Cardiac septum (tissue), 1 donor: ENCODE measurements at regions of chr11 and their contacts with region 1.

Region 1: DNA sequence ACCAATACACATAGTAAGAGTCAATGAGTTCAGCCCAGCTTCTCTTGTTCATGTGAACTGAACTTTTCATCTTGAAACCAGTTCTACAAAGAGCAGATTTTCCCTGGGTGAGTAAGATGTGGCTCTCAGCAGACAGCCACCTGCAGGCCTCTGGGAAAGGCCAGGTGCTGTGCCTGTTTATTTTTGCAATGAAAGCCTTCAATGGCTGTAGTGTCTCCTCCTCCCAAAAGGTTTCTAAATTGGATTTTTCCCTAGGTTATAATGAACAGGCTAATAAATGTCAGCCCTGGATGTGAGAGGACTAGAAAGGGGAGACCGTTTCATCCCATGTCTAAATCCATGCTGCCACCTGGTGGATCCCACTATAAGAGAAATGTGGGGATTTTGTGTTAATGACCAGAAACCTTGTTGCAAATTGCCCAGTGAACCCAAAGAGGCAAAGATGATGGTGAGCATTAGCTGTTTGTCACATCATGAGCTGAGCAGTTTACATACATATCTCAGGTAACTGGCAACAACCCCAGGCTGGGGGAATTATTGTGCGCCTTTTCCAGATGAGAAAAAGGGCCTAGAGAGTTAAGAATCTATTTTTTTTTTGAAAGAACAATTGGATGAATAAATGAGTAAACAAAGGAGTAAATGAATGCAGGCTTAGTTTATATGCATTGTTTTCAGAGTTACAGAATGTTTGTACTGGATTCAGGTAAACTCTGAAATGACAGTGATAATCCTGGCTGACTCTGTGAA is 12.7 kb downstream of the C11orf91 start:
- DNase-seq: no peak

Region 2: GRCh38 chr11:33161120-33162005 is 526.5 kb before region 1 on chr11 and contains the start of gene CSTF3:
- intact Hi-C with region 1: loop called (anchors 2 kb)
- DNase-seq: peak; percentile 100
- total RNA-seq, gene CSTF3: 16.0 TPM

Region 3: GRCh38 chr11:33362051-33362910 is 325.6 kb before region 1 on chr11:
- intact Hi-C with region 1: loop called (anchors 2 kb)
- DNase-seq: no peak

Region 4: GRCh38 chr11:33542921-33543320 is 145.0 kb before region 1 on chr11:
- intact Hi-C with region 1: loop called (anchors 5 kb)
- DNase-seq: no peak

Region 5: DNA sequence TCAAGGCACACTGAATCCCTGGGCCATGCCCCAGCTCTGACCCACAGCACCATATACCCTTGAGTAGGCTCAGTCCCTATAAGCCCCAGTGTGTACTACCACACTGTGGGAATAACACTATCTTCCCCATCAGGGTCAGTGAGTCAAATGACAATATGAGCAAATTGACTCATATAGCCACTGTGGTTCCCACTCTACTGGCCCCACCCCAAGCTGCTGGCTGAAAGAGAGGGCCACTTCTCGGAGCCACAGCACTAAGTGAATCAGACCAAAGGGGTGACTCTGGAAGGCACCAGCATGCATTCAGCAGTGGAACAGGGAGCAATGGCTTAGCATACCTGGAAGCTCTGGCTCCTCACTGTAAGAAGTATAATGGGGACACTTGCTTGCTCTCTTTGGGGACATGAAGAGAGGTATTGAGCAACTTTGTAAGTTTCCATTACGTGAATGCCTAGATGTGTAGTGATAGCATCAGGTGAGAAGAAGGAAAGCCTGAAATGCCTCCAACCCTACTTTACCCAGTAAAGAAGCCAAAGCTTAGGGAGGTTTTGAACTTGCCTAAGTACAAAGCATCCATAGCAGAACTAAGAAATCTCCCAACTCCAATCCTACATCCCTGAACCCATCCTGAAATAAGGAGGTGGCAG is 34.8 kb after region 1 on chr11:
- intact Hi-C with region 1: loop called (anchors 1 kb)
- DNase-seq: no peak

Region 6: DNA sequence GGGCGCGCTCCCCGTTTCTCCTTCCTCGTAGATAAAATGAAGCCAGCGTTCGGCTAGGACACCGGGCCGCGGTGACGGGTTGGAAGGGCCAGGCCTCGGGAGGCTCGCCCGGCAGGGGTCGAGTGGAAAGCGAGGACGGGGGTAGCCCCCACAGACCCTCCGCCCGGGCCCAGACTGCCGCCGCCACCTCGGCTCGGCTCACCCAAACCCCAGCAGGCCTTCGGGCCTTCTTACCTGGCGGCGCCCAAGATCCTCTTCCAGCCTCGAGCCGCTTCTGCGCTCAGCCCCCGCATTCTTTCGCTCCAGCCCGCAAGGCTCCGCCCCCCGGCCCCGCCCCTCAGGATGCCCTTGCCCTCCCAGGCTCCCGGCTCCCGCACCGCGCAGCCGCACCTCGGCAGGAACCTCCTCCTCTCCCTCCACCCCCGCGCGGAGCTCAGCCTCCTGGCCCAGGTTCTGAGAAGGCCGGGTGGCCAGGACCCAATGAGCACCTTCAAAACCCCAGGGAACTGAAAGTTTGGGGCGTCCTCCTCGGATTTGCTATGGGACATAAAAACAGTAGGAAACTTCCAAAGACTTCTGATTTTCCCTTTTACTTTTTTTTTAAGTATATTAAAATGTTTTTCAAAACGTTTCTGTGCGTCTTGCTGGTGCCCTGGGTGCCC is 48.4 kb after region 1 on chr11 and contains the start of gene CD59:
- intact Hi-C with region 1: loop called (anchors 2 kb)
- DNase-seq: peak; percentile 99
- total RNA-seq, gene CD59: 932 TPM

Region 7: GRCh38 chr11:34051349-34052035 is 363.6 kb after region 1 on chr11 and contains the start of gene CAPRIN1:
- intact Hi-C with region 1: no loop called
- DNase-seq: peak; percentile 94
- total RNA-seq, gene CAPRIN1: 108 TPM